ENCODE measurements at regions of chr6 and their contacts with region 1.

Region 1: GRCh38 chr6:12472601-12473038 is 182.5 kb downstream of the EDN1 start:
- DNase-seq: peak; percentile 100
- H3K4me3 ChIP-seq: no peak overlapping the region
- H3K27ac ChIP-seq: peak overlapping the region; percentile 91
- H3K4me1 ChIP-seq: peaks cover 36% of the 10 kb centered on the region
- H3K27me3 ChIP-seq: no peaks in the 10 kb centered on the region
- CTCF ChIP-seq: no peak

Region 2: GRCh38 chr6:12296255-12296573 is 176.4 kb before region 1 on chr6:
- CTCF ChIA-PET with region 1: no interaction called
- dilution Hi-C with region 1: no loop called
- in situ Hi-C with region 1: loop called (anchors 10 to 25 kb)
- intact Hi-C with region 1: loop called (anchors 1 kb)
- DNase-seq: peak; percentile 75
- H3K4me3 ChIP-seq: no peak overlapping the region
- H3K27ac ChIP-seq: peak overlapping the region; percentile 61
- H3K4me1 ChIP-seq: peaks cover 11% of the 10 kb centered on the region
- H3K27me3 ChIP-seq: no peaks in the 10 kb centered on the region
- CTCF ChIP-seq: no peak

Region 3: GRCh38 chr6:12313992-12314805 is 158.4 kb before region 1 on chr6:
- CTCF ChIA-PET with region 1: no interaction called
- dilution Hi-C with region 1: no loop called
- in situ Hi-C with region 1: loop called in 1 of 2 experiments (anchors 25 kb)
- intact Hi-C with region 1: loop called (anchors 5 kb)
- DNase-seq: peak; percentile 90
- H3K4me3 ChIP-seq: no peak overlapping the region
- H3K27ac ChIP-seq: peak overlapping the region; percentile 83
- H3K4me1 ChIP-seq: peaks cover 23% of the 10 kb centered on the region
- H3K27me3 ChIP-seq: no peaks in the 10 kb centered on the region
- CTCF ChIP-seq: no peak

Region 4: DNA sequence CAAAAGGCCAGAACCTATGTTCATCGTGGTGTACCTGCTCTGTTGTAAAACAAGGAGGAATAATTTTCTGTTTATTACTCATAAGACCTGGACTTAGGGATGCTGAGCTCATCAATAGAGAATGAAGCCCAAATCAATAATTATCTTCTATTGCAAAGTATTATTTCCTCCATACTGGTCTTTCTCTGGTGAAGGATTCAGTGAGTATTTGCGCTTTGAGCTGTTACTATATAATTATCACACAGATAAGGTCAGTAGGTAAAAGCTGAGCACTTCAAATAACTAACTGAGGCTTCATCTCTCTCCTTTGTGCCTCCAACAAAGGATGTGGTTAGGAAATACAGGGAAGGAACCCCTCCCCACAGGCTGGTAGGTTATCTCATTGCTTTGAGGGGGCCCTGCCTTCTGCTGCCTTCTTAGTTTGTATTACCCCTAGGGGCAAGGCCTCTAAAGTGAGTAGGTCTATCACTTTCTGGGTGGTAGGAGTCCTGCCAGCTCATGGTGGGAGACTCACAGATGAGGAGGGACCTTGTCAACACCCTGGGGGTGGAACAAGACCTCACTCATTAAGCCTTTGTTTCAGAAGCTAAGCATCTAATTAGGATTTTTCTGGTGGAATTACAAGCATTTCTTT is 148.0 kb before region 1 on chr6:
- CTCF ChIA-PET with region 1: no interaction called
- dilution Hi-C with region 1: no loop called
- in situ Hi-C with region 1: loop called in 1 of 2 experiments (anchors 25 kb)
- intact Hi-C with region 1: loop called (anchors 2 kb)
- DNase-seq: no peak
- H3K4me3 ChIP-seq: no peak overlapping the region
- H3K27ac ChIP-seq: peak overlapping the region; percentile 99
- H3K4me1 ChIP-seq: peaks cover 50% of the 10 kb centered on the region
- H3K27me3 ChIP-seq: no peaks in the 10 kb centered on the region
- CTCF ChIP-seq: no peak

Region 5: DNA sequence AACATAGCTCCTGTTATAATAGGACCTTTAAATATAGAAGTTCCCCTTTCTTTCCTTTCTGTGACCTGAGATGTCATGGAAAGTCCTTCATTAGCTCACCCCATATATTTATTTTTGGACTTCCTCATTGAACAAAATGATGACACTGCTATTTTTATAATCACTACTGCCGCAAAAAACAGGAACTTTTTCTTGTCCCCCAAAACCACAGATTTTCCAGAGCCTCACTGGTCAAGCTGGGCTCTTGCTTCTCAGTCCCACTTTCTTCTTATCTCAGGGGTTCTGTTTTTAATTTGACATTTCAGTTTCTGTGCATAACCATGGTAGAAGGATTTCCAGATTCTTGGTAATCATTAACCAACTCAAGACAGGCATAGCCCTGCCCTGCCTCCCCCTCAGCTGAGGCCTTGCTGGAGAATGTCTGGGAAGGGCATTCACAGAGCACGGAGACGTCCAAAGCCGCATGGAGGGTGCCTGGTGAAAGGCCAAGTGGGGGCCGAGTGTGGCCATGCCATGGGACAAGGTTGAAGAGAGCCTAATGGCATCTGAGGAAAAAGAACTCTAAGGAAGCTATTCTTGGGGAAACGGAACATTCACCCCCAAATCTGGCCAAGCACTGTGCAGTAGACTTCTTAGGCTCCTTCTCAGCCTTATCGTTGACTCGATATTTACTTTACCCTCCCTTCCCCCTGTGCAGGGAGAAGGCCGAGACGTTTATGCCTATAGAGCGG is 108.8 kb before region 1 on chr6:
- CTCF ChIA-PET with region 1: no interaction called
- dilution Hi-C with region 1: no loop called
- in situ Hi-C with region 1: no loop called
- intact Hi-C with region 1: no loop called
- DNase-seq: no peak
- H3K4me3 ChIP-seq: no peak overlapping the region
- H3K27ac ChIP-seq: no peak overlapping the region
- H3K4me1 ChIP-seq: no peaks in the 10 kb centered on the region
- H3K27me3 ChIP-seq: no peaks in the 10 kb centered on the region
- CTCF ChIP-seq: no peak

Region 6: GRCh38 chr6:12440981-12441380 is 31.6 kb before region 1 on chr6:
- CTCF ChIA-PET with region 1: no interaction called
- dilution Hi-C with region 1: no loop called
- in situ Hi-C with region 1: no loop called
- intact Hi-C with region 1: loop called (anchors 2 kb)
- DNase-seq: peak; percentile 36
- H3K4me3 ChIP-seq: no peak overlapping the region
- H3K27ac ChIP-seq: no peak overlapping the region
- H3K4me1 ChIP-seq: peaks cover 5% of the 10 kb centered on the region
- H3K27me3 ChIP-seq: no peaks in the 10 kb centered on the region
- CTCF ChIP-seq: no peak

Region 7: GRCh38 chr6:12483712-12484111 is 11.1 kb after region 1 on chr6:
- CTCF ChIA-PET with region 1: no interaction called
- dilution Hi-C with region 1: no loop called
- in situ Hi-C with region 1: no loop called
- intact Hi-C with region 1: loop called (anchors 1 kb)
- DNase-seq: peak; percentile 91
- H3K4me3 ChIP-seq: no peak overlapping the region
- H3K27ac ChIP-seq: peak overlapping the region; percentile 74
- H3K4me1 ChIP-seq: peaks cover 30% of the 10 kb centered on the region
- H3K27me3 ChIP-seq: no peaks in the 10 kb centered on the region
- CTCF ChIP-seq: no peak

Region 8: DNA sequence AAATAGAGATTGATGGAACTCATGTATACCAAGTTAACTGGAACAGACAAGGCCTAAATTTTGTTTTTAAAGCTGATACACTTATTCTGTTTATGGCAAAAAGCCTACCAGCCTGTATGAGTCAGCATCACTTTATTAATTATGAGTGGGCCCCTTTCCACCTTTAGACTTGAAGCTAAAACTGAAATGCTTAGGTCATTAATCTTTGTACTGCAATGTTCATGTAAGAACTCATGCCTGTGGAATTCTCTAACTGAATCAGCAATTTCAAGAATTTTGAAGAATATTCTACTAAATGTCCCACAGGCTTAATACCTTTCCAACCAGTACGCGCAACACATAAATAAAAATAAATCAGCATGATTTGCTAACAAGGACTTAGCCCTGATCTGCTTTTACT is 103.8 kb after region 1 on chr6:
- CTCF ChIA-PET with region 1: no interaction called
- dilution Hi-C with region 1: no loop called
- in situ Hi-C with region 1: no loop called
- intact Hi-C with region 1: loop called (anchors 2 kb)
- DNase-seq: peak; percentile 66
- H3K4me3 ChIP-seq: no peak overlapping the region
- H3K27ac ChIP-seq: peak overlapping the region; percentile 83
- H3K4me1 ChIP-seq: peaks cover 48% of the 10 kb centered on the region
- H3K27me3 ChIP-seq: no peaks in the 10 kb centered on the region
- CTCF ChIP-seq: no peak